ENCODE measurements at regions of chr3 and their contacts with region 1.

Region 1: GRCh38 chr3:27484015-27484844 is at the start of gene SLC4A7:
- DNase-seq: peak; percentile 97 to 98
- ATAC-seq: peak; percentile 95 to 98 (median 96)
- H3K4me3 ChIP-seq: peak within 1 kb of the TSS; percentile 90
- H3K27ac ChIP-seq: peak within 1 kb of the TSS; percentile 90
- H3K4me1 ChIP-seq: peaks cover 25% of the 10 kb centered on the region
- H3K27me3 ChIP-seq: no peaks in the 10 kb centered on the region
- CTCF ChIP-seq: no peak
- total RNA-seq, gene SLC4A7: 13.3 to 26.6 (median 16.8) TPM

Region 2: GRCh38 chr3:27507515-27508202 is 23.4 kb after region 1 on chr3:
- intact Hi-C with region 1: no loop called
- DNase-seq: no peak
- ATAC-seq: no peak
- H3K4me3 ChIP-seq: no peak overlapping the region
- H3K27ac ChIP-seq: no peak overlapping the region
- H3K4me1 ChIP-seq: no peaks in the 10 kb centered on the region
- H3K27me3 ChIP-seq: no peaks in the 10 kb centered on the region
- CTCF ChIP-seq: no peak

Region 3: GRCh38 chr3:27533718-27534573 is 49.7 kb after region 1 on chr3:
- intact Hi-C with region 1: no loop called
- DNase-seq: peak; percentile 67 to 73
- ATAC-seq: peak; percentile 48 to 82 (median 58)
- H3K4me3 ChIP-seq: no peak overlapping the region
- H3K27ac ChIP-seq: peak overlapping the region; percentile 54
- H3K4me1 ChIP-seq: peaks cover 12% of the 10 kb centered on the region
- H3K27me3 ChIP-seq: no peaks in the 10 kb centered on the region
- CTCF ChIP-seq: no peak

Region 4: DNA sequence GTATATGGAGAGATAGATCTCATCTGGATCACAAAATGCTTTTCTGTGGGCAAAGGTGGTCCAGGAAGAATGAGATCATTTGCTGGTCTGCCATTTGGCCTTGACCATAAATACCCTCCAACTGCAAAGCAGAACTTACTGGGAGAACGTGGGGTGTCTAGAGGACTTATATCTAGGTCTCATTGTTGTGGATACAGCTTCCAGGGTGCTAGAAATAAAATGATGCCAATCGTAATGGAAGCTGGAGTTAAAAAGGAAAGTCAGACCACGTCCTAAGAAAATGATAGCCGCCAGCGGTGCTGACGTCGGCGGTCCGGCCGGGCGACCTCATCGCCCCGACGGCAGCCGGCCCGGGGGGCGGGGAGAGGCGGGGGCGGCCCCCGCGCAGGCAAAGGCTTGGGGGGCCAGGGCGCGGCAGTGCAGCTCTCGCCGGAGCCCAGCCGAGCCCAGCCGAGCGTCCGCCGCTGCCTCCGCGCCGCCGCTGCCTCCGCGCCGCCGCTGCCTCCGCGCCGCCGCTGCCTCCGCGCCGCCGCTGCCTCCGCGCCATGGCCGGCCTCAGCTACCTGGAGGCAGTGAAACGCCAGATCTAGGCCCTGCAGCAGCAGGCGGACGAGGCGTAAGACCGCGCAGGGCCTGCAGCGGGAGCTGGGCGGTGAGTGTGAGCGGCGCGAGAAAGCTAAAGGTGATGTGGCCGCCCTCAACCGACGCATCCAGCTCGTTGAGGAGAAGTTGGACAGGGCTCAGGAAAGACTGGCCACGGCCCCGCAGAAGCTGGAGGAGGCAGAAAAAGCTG is 148.4 kb after region 1 on chr3:
- intact Hi-C with region 1: loop called (anchors 5 to 10 kb)
- DNase-seq: peak; percentile 48 to 63
- ATAC-seq: peak in 3 of 4 donors; percentile 55 to 61 (median 57)
- H3K4me3 ChIP-seq: peak overlapping the region; percentile 67
- H3K27ac ChIP-seq: peak overlapping the region; percentile 63
- H3K4me1 ChIP-seq: no peaks in the 10 kb centered on the region
- H3K27me3 ChIP-seq: peaks cover 0 to 5% (median 0%) of the 10 kb centered on the region in 3 donors
- CTCF ChIP-seq: no peak

Measured in psoas muscle (tissue), 8 donors.